Thyroid gland (tissue), 4 donors: ENCODE measurements at regions of chr7 and their contacts with region 1.

Region 1: GRCh38 chr7:112206238-112207044 is at the starts of genes DOCK4 and ZNF277:
- DNase-seq: peak; percentile 98 to 99
- H3K4me3 ChIP-seq: peak within 1 kb of the TSS; percentile 78 to 93 (median 80)
- H3K27ac ChIP-seq: peak within 1 kb of the TSS; percentile 34 to 82 (median 73)
- H3K4me1 ChIP-seq: peaks cover 10 to 18% of the 10 kb centered on the region in 2 donors
- H3K27me3 ChIP-seq: no peaks in the 10 kb centered on the region
- CTCF ChIP-seq: peak in 1 of 6 experiments; percentile 4
- POLR2A ChIP-seq: peak; percentile 29 to 97
- total RNA-seq, gene DOCK4: 14.0 to 48.1 (median 30.9) TPM
- total RNA-seq, gene ZNF277: 28.4 to 45.4 (median 36.5) TPM

Region 2: DNA sequence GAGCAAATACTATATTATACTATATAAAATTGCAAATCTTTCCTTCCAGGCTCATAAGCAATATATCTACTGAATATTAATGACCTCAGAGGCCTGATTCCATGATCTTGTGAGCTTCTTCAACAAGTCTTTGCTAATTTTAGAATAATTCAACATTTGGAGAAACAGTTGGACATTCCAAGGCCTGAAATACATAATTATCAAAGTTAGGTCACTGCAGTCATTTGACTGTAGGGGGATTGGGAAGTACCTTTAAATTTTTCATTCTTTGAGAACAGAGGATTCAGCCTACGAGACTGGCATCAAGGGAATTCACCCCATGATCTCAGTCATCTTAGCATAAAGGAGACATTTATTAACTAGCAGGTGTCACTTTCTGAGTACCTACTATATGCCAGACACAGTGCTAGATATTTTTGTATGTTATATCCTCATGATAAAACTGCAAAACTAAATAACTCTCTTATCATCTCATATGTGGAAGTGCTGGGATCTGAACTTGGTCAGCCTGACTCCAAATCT is 85.7 kb before region 1 on chr7:
- intact Hi-C with region 1: no loop called
- DNase-seq: no peak
- H3K4me3 ChIP-seq: no peak overlapping the region
- H3K27ac ChIP-seq: no peak overlapping the region
- H3K4me1 ChIP-seq: no peaks in the 10 kb centered on the region
- H3K27me3 ChIP-seq: no peaks in the 10 kb centered on the region
- CTCF ChIP-seq: no peak
- POLR2A ChIP-seq: no peak

Region 3: DNA sequence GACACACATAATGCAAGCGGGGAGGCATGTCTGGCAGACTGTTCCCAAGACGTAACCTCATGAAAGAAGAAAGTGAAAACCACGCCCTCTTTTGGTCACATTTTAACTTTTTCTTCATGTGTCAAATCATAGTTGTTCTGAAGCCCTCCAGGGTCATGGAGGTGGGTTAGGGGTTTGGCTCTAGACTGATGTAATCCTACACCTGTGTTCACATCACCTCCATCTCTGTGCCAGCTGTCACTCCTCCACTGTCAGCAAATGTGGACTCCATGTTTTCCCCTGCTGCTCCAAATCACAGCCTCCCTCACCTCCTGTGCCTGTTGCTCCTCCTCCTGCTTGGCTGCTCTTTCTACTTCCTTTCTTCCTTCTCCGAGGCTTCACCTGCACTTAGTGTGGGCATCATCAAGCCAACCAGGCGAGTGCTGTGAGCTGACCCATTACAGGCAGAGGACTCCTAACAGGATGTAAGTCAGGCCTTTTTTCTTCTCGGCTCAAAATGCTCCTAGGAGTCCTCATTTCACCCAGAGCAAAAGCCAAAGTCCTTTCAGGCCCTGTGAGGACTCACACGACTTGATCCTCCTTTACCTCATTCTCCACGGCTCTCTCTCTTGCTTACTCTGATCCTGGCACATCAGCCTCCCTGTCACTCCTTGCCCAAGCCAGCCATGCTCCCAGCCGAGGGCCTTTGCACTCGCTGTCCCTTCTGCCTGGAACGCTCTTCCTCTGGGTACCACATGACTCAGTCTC is 177.4 kb after region 1 on chr7:
- intact Hi-C with region 1: loop called (anchors 10 kb)
- DNase-seq: no peak
- H3K4me3 ChIP-seq: no peak overlapping the region
- H3K27ac ChIP-seq: no peak overlapping the region
- H3K4me1 ChIP-seq: peaks cover 0 to 8% of the 10 kb centered on the region in 2 donors
- H3K27me3 ChIP-seq: no peaks in the 10 kb centered on the region
- CTCF ChIP-seq: peak in 1 of 6 experiments; percentile 4
- POLR2A ChIP-seq: no peak

Region 4: GRCh38 chr7:112449902-112450806 is 243.7 kb after region 1 on chr7 and contains the start of gene IFRD1:
- intact Hi-C with region 1: loop called (anchors 10 kb)
- DNase-seq: peak; percentile 99 to 100
- H3K4me3 ChIP-seq: peak within 1 kb of the TSS; percentile 94 to 99 (median 99)
- H3K27ac ChIP-seq: peak within 1 kb of the TSS; percentile 98 to 100 (median 100)
- H3K4me1 ChIP-seq: peaks cover 20 to 28% of the 10 kb centered on the region in 2 donors
- H3K27me3 ChIP-seq: no peaks in the 10 kb centered on the region
- CTCF ChIP-seq: no peak
- POLR2A ChIP-seq: peak; percentile 94 to 96
- total RNA-seq, gene IFRD1: 34.5 to 84.8 (median 57.1) TPM